ENCODE measurements at regions of chr3 and their contacts with region 1.

Region 1: GRCh38 chr3:170440346-170440745 is 21.7 kb downstream of the CLDN11 start:
- DNase-seq: no peak
- H3K4me3 ChIP-seq: no peak overlapping the region
- H3K27ac ChIP-seq: no peak overlapping the region
- H3K4me1 ChIP-seq: no peaks in the 10 kb centered on the region
- H3K27me3 ChIP-seq: no peaks in the 10 kb centered on the region
- CTCF ChIP-seq: no peak
- POLR2A ChIP-seq: no peak

Region 2: GRCh38 chr3:170007031-170007663 is 433.2 kb before region 1 on chr3:
- intact Hi-C with region 1: loop called (anchors 10 kb)
- DNase-seq: no peak
- H3K4me3 ChIP-seq: no peak overlapping the region
- H3K27ac ChIP-seq: no peak overlapping the region
- H3K4me1 ChIP-seq: no peaks in the 10 kb centered on the region
- H3K27me3 ChIP-seq: no peaks in the 10 kb centered on the region
- CTCF ChIP-seq: no peak
- POLR2A ChIP-seq: no peak

Region 3: DNA sequence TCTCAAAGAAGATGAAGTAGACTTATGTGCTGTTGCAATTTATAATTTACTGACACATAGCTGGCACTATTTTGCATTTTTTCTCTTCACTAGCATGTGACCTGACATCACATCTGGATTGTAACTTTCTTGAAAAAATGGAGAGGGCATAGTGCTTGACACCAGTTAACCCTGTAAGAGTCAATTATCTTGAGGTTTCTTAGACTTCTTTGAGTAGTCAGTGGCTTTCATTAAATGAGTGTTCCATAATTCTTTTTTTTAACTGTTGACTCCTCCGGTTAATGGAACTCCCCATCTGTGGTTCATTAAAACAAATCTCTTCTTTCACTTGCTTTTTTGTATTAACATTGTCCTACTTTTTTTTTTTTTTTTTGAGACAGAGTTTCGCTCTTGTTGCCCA is 235.0 kb before region 1 on chr3:
- intact Hi-C with region 1: no loop called
- DNase-seq: no peak
- H3K4me3 ChIP-seq: no peak overlapping the region
- H3K27ac ChIP-seq: no peak overlapping the region
- H3K4me1 ChIP-seq: no peaks in the 10 kb centered on the region
- H3K27me3 ChIP-seq: no peaks in the 10 kb centered on the region
- CTCF ChIP-seq: no peak
- POLR2A ChIP-seq: no peak

Region 4: DNA sequence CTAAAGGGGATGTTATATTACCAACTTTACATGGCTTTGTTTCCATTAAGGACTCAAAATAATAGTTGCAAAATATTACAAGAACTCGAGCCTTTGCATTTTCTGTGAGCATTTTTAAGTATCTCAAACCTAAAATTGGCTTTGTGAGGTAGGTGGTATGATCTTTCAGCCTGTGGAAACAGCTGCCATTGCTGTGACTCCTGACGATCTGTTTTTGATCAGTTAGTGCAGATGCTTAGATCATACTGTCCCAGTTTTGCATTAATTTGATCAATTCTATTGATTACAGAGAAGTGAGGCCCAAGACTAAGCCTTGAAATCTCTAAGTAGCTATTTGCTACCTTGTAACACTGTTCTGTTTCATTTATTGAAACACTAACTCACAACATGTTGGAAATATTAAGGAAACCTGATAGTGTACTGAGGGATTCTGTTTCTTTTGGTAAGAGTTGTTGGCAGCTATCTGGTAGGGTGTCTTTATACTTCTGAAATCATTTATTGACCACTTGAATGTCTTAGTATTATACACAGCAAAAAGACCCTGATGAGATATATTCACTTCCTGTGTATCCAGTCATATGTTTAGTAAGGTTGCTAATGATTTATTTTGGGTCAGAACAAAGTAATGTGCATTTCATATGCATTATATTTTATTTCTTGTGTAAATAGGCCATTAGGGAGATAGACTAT is 68.0 kb before region 1 on chr3:
- intact Hi-C with region 1: no loop called
- DNase-seq: no peak
- H3K4me3 ChIP-seq: no peak overlapping the region
- H3K27ac ChIP-seq: no peak overlapping the region
- H3K4me1 ChIP-seq: no peaks in the 10 kb centered on the region
- H3K27me3 ChIP-seq: no peaks in the 10 kb centered on the region
- CTCF ChIP-seq: no peak
- POLR2A ChIP-seq: no peak

Measured in uterus (tissue), 4 donors.